ENCODE measurements at regions of chr1 and their contacts with region 1.

Region 1: DNA sequence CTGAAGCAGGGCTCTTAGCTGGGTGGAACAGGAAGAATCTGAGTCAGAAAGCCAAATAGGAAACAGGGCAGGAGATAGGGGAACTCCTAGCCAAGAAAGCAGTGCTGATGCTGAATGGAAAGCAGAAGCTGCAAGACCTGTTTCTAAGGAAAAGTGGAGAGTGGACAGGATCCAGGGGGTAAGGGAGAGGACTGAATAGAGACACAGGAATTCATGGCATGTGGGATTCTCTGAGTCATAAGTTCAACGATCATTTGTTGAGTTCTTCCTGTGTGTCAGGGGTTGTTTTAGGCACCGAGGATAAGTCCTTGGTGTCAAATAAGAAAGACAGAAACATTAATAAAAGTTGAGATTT is 153.8 kb upstream of the FGGY start:
- DNase-seq: peak; percentile 95
- H3K4me3 ChIP-seq: no peak overlapping the region
- H3K27ac ChIP-seq: peak overlapping the region; percentile 60
- H3K4me1 ChIP-seq: peaks cover 56% of the 10 kb centered on the region
- H3K27me3 ChIP-seq: no peaks in the 10 kb centered on the region
- CTCF ChIP-seq: no peak

Region 2: DNA sequence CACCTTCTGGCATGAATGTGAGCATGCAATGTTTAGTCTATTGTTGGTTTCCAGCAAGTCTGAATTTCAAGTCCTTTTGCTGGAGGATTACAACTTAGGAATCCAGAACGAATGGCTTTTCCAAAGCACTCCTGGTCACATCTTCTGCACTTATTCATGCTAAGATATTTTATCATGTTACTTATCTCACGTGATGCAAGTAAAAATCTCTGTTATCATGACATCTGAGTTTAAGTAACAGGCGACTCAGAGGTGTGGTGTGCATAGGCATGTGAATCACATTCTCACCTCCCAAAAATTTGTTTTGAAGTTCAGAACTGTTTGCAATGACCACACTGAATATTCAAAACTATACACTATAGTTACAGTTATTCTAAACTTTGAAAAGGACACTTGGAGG is 51.0 kb before region 1 on chr1:
- CTCF ChIA-PET with region 1: no interaction called
- dilution Hi-C with region 1: no loop called
- in situ Hi-C with region 1: no loop called
- intact Hi-C with region 1: loop called (anchors 2 kb)
- DNase-seq: peak; percentile 47
- H3K4me3 ChIP-seq: no peak overlapping the region
- H3K27ac ChIP-seq: no peak overlapping the region
- H3K4me1 ChIP-seq: peaks cover 6% of the 10 kb centered on the region
- H3K27me3 ChIP-seq: no peaks in the 10 kb centered on the region
- CTCF ChIP-seq: no peak